Activated CD4-positive, alpha-beta memory T cell treated with anti-CD3 and anti-CD28 coated beads, Interleukin-2, amount 10 ng/mL, durations not matched to agents 7 days and 5 days (primary cell): ENCODE measurements at regions of chr3 and their contacts with region 1.

Region 1: DNA sequence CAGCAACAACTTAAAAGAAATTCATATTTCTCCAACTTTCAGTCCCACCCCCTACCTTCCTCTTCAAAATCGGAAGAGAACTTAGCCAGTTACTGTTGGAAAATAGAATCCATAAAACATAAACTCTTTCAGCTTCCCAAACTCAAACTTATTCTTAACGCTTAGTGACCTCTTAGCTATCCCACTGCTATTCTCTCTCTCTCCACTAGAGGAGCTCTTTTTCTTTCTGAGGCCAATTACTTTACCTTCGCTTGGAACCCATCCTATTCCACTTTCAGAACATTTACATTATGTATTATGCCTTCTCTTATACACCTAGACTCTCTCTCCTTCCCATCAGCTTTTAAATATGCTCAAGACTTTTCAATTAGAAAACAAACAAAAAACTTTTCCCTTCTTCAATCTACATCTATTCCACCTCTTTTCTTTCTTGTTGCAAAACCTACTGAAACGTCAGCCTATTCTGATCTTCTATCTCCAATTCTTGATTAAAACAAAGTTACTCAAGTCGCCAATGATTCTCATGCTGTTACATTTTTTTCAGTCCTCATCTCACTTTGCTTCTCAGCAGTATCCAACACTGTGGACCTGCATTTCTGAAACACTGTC is 13.4 kb upstream of the GHSR start:
- DNase-seq: no peak
- H3K4me3 Mint-ChIP-seq: no peak overlapping the region
- H3K27ac Mint-ChIP-seq: no peak overlapping the region
- H3K4me1 Mint-ChIP-seq: peaks cover 4% of the 10 kb centered on the region
- H3K27me3 Mint-ChIP-seq: peaks cover 4% of the 10 kb centered on the region

Region 2: DNA sequence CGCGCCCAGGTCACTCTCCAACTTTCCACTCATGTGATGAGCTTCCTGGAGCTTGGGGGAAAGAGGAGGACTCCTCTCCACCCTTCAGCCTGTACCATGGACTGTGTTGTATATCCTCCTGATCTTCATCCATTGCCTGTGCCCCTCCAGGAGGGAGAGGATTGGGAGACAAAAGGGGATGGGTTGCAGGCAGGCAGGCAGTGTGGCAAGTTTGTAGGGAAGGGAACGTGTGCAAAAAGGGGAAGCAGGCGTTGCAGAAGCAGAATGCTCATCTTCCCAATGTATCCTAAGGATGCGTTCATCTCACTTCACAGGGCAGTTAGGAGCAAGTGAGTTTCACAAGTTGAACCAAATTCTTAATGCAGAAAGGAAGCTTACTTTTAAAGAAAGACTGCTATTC is 14.7 kb after region 1 on chr3:
- CTCF ChIA-PET with region 1: interaction called, 20 read pairs
- POLR2A ChIA-PET with region 1: interaction called, 3 read pairs
- DNase-seq: no peak
- H3K4me3 Mint-ChIP-seq: peak overlapping the region; percentile 79
- H3K27ac Mint-ChIP-seq: no peak overlapping the region
- H3K4me1 Mint-ChIP-seq: peaks cover 19% of the 10 kb centered on the region
- H3K27me3 Mint-ChIP-seq: peaks cover under 1% of the 10 kb centered on the region

Region 3: DNA sequence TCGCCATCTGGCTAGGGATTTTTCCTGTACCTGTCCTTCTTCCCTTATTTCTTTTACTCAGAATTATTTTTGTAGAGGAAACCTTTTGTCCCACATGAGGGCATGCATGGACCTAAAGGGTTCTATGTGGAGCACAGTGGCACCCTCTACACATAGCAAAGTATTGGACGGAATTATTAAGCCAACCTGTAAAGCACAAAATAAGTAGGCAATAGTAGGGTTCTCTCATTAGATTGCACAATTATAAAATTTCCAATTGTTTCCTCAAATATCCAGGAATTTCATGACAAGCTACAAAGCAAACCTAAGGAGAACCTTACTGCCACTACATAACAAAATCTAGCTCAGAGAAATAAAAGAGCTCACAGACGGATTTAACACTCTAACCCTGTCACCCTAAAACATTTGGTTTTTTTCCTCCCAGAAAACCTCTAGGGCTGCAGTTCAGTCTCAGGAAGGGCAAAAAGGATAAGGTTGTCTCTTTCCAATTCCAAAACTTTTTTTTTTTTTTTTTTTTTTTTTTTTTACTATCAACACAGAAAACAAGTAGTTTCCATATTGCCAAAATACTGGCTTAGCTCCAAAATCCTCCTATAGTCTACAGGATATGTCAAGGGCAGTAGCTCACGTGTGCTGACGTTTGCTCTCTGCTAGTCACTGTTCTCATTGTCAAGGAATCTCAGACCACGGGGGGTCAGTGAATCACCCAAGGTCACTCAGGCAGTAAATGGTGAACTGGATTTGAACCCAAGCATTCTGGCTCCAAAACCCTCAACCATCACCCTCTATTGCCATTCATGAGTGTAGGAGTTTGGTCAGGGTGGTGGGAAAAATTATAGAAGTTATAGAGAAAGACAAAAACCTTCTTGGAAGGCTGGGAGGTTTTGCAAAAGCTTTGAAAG is 197.0 kb after region 1 on chr3:
- CTCF ChIA-PET with region 1: no interaction called
- POLR2A ChIA-PET with region 1: no interaction called
- DNase-seq: no peak
- H3K4me3 Mint-ChIP-seq: no peak overlapping the region
- H3K27ac Mint-ChIP-seq: no peak overlapping the region
- H3K4me1 Mint-ChIP-seq: peaks cover 7% of the 10 kb centered on the region
- H3K27me3 Mint-ChIP-seq: no peaks in the 10 kb centered on the region